GM13977 (cell line): ENCODE measurements at regions of chr4 and their contacts with region 1.

Region 1: GRCh38 chr4:173413036-173413435 is 14.1 kb upstream of the SCRG1 start:
- DNase-seq: no peak
- CTCF ChIP-seq: no peak

Region 2: DNA sequence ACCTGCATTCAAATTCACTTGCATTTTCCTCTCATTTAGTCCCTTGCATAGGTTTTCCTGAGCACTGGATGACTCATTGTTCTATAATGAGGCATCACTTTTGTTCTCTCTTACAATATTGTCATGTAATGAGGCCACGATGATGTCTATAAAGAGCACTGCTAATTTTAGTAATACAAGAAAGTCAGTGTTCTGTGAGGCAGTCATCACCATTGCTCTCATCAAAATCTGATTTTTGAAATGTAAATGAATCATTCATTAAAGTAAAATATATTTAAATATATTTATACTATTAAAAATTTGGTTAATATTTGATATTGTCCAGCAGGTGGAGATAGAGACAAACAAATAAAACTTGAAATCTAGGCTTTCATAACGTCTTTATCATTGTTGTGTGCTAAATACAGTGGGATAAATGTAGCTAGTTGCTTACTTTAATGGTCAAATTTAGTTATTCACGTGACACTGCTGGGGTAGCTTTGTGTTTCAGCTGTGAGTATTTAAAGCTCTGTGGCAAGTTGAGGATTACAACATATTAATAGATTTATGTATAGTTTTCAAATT is 94.3 kb before region 1 on chr4:
- in situ Hi-C with region 1: loop called (anchors 5 kb)
- DNase-seq: no peak
- CTCF ChIP-seq: no peak